Activated naive CD4-positive, alpha-beta T cell treated with anti-CD3 and anti-CD28 coated beads for 36 hours (primary cell): ENCODE measurements at regions of chr5 and their contacts with region 1.

Region 1: GRCh38 chr5:60944904-60945812 is at the starts of genes ERCC8 and NDUFAF2:
- DNase-seq: peak; percentile 92
- H3K4me3 Mint-ChIP-seq: no peak within 1 kb of the TSS
- H3K27ac Mint-ChIP-seq: peak within 1 kb of the TSS; percentile 62
- H3K4me1 Mint-ChIP-seq: peaks cover 24% of the 10 kb centered on the region
- H3K27me3 Mint-ChIP-seq: no peaks in the 10 kb centered on the region
- total RNA-seq, gene ERCC8: 7.8 to 9.1 TPM
- total RNA-seq, gene NDUFAF2: 35.6 to 38.5 TPM

Region 2: GRCh38 chr5:59810041-59810440 is 1135.1 kb before region 1 on chr5:
- CTCF ChIA-PET with region 1: no interaction called
- intact Hi-C with region 1: loop called (anchors 5 kb)
- DNase-seq: peak; percentile 73
- H3K4me3 Mint-ChIP-seq: no peak overlapping the region
- H3K27ac Mint-ChIP-seq: no peak overlapping the region
- H3K4me1 Mint-ChIP-seq: no peaks in the 10 kb centered on the region
- H3K27me3 Mint-ChIP-seq: peaks cover 10% of the 10 kb centered on the region

Region 3: GRCh38 chr5:60699530-60700382 is 245.4 kb before region 1 on chr5 and contains the start of gene DEPDC1B:
- CTCF ChIA-PET with region 1: interaction called, 3 read pairs
- intact Hi-C with region 1: loop called (anchors 1 kb)
- DNase-seq: peak; percentile 90
- H3K4me3 Mint-ChIP-seq: peak within 1 kb of the TSS; percentile 88
- H3K27ac Mint-ChIP-seq: peak within 1 kb of the TSS; percentile 81
- H3K4me1 Mint-ChIP-seq: peaks cover 12% of the 10 kb centered on the region
- H3K27me3 Mint-ChIP-seq: peaks cover 5% of the 10 kb centered on the region
- total RNA-seq, gene DEPDC1B: 35.0 to 35.8 TPM

Region 4: DNA sequence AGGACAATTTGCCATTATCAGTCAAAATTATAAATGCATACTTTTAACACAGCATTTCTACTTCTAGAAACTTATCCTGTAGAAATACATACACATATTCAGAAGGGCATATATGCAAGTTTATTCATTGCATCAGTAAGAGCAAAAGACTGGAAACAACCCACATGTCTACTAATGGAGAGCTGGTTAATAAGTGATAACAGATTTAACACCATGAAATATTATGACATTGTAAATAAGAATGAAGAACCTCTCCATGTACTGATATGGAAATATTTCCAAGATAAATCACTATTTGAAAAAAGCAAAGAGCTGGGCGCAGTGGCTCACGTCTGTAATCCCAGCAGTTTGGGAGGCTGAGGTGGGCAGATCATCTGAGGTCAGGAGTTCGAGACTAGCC is 155.6 kb before region 1 on chr5:
- CTCF ChIA-PET with region 1: no interaction called
- intact Hi-C with region 1: no loop called
- DNase-seq: no peak
- H3K4me3 Mint-ChIP-seq: no peak overlapping the region
- H3K27ac Mint-ChIP-seq: no peak overlapping the region
- H3K4me1 Mint-ChIP-seq: no peaks in the 10 kb centered on the region
- H3K27me3 Mint-ChIP-seq: peaks cover 7% of the 10 kb centered on the region

Region 5: DNA sequence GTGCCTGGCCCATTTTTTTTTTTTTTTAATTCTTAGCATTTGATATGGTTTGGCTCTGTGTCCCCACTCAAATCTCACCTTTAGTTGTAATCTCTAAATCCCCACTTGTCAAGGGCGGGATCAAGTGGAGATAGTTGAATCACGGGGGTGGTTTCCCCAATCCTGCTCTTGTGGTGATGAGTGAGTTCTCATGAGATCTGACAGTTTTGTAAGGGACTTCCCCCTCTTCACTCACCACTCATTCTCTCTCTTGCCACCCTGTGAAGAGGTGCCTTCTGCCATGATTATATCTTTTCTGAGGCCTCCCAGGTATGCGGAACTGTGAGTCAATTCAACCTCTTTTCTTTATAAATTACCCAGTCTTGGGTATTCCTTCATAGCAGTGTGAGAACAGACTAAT is 27.1 kb after region 1 on chr5:
- CTCF ChIA-PET with region 1: no interaction called
- intact Hi-C with region 1: loop called (anchors 1 kb)
- DNase-seq: peak; percentile 78
- H3K4me3 Mint-ChIP-seq: no peak overlapping the region
- H3K27ac Mint-ChIP-seq: peak overlapping the region; percentile 11
- H3K4me1 Mint-ChIP-seq: peaks cover 26% of the 10 kb centered on the region
- H3K27me3 Mint-ChIP-seq: no peaks in the 10 kb centered on the region

Region 6: GRCh38 chr5:61910771-61911170 is 965.6 kb after region 1 on chr5:
- CTCF ChIA-PET with region 1: no interaction called
- intact Hi-C with region 1: no loop called
- DNase-seq: no peak
- H3K4me3 Mint-ChIP-seq: no peak overlapping the region
- H3K27ac Mint-ChIP-seq: no peak overlapping the region
- H3K4me1 Mint-ChIP-seq: no peaks in the 10 kb centered on the region
- H3K27me3 Mint-ChIP-seq: no peaks in the 10 kb centered on the region

Region 7: GRCh38 chr5:62403434-62404250 is 1458.5 kb after region 1 on chr5 and contains the start of gene DIMT1:
- CTCF ChIA-PET with region 1: no interaction called
- intact Hi-C with region 1: loop called (anchors 1 kb)
- DNase-seq: peak; percentile 97
- H3K4me3 Mint-ChIP-seq: peak within 1 kb of the TSS; percentile 98
- H3K27ac Mint-ChIP-seq: peak within 1 kb of the TSS; percentile 90
- H3K4me1 Mint-ChIP-seq: peaks cover 19% of the 10 kb centered on the region
- H3K27me3 Mint-ChIP-seq: no peaks in the 10 kb centered on the region
- total RNA-seq, gene DIMT1: 47.4 to 48.4 TPM